Endothelial cell of umbilical vein (primary cell): ENCODE measurements at regions of chr18 and their contacts with region 1.

Region 1: GRCh38 chr18:25517881-25518715 is 166.1 kb upstream of the ZNF521 start:
- DNase-seq: peak; percentile 99
- H3K4me3 ChIP-seq: no peak overlapping the region
- H3K27ac ChIP-seq: peak overlapping the region; percentile 91
- H3K4me1 ChIP-seq: peaks cover 37% of the 10 kb centered on the region
- H3K27me3 ChIP-seq: no peaks in the 10 kb centered on the region
- CTCF ChIP-seq: no peak
- POLR2A ChIP-seq: no peak

Region 2: DNA sequence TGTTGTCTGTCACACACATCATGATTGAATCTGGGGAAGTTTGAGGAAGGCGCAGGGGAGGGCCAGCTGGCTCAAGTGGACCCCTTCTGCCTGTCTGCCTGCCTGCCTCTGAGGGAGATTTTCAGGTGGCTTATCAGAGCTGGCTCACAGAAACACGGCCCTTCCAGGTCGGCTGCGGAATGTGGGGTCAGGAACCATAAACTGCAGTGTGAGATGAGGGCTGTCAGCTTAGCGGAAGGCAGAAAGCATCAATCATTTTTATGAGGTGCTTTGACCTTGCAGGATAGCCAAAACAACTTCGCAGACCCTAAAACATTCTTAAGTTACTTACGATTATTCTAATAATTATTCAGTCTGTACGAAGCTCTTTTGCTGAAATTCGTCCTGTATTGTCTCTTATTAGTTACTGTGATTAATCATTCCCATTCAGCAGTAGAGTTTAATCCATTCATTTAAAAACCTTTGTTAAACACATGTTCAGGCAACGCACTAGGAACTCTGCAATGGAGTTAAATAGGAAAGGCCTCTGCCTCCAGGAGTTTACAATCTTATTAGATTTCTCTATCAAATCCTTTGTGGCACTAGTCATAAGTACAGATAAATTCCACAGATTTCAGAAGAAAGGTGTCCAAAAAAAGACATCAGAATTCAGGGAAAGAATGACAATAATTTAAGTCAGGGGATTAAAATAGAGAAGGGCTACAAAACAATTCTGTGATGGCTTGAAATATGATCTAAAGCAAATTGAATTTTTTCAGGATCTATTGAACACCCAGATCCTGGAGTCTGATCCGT is 686.0 kb before region 1 on chr18:
- CTCF ChIA-PET with region 1: interaction called, 3 read pairs
- POLR2A ChIA-PET with region 1: no interaction called
- dilution Hi-C with region 1: no loop called
- intact Hi-C with region 1: loop called (anchors 1 kb)
- DNase-seq: peak; percentile 98
- H3K4me3 ChIP-seq: no peak overlapping the region
- H3K27ac ChIP-seq: peak overlapping the region; percentile 93
- H3K4me1 ChIP-seq: peaks cover 37% of the 10 kb centered on the region
- H3K27me3 ChIP-seq: peaks cover 0 to 2% of the 10 kb centered on the region in 2 experiments
- CTCF ChIP-seq: no peak
- POLR2A ChIP-seq: peak; percentile 96

Region 3: GRCh38 chr18:24878289-24878688 is 639.8 kb before region 1 on chr18:
- CTCF ChIA-PET with region 1: no interaction called
- POLR2A ChIA-PET with region 1: no interaction called
- dilution Hi-C with region 1: no loop called
- intact Hi-C with region 1: loop called (anchors 5 kb)
- DNase-seq: peak; percentile 75
- H3K4me3 ChIP-seq: no peak overlapping the region
- H3K27ac ChIP-seq: no peak overlapping the region
- H3K4me1 ChIP-seq: peaks cover 11% of the 10 kb centered on the region
- H3K27me3 ChIP-seq: no peaks in the 10 kb centered on the region
- CTCF ChIP-seq: peak; percentile 23 to 44
- POLR2A ChIP-seq: no peak

Region 4: DNA sequence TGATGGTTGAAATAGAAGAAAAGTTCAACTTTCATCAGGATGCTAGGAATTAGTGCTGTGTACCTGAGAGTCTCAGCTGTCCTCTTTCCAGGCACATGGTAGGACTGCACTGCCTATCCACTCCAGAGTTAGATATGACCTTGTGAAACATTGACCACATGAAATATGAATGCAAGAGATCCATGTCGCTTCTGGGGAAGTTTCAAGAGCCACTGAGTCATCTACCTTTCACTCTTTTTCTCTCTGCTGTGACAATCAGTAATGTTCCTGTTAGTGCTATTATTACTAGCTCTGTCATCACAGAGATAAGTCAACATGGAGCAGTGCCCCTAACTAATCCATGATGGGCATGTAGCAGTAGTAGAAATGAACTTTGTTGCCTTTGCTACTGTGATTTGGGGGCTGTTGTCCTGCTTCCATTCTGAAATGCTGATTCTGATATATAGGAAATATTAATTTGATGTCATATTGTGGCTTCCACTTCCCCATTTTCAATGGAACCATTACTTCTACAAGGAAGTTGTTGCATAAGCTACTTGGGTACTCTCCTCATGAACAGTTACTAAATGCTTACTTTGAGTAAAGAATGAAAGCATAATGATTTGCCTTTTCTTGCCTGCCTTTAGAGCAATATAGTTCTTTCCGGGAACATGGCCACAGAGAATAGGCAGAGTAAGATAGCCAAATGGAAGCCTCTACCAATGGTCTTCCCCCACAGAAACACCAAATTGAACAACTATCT is 26.6 kb after region 1 on chr18:
- CTCF ChIA-PET with region 1: no interaction called
- POLR2A ChIA-PET with region 1: no interaction called
- dilution Hi-C with region 1: no loop called
- intact Hi-C with region 1: no loop called
- DNase-seq: no peak
- H3K4me3 ChIP-seq: no peak overlapping the region
- H3K27ac ChIP-seq: no peak overlapping the region
- H3K4me1 ChIP-seq: no peaks in the 10 kb centered on the region
- H3K27me3 ChIP-seq: peaks cover 0 to 2% of the 10 kb centered on the region in 2 experiments
- CTCF ChIP-seq: no peak
- POLR2A ChIP-seq: no peak

Region 5: GRCh38 chr18:25561918-25562317 is 43.8 kb after region 1 on chr18:
- CTCF ChIA-PET with region 1: interaction called, 3 read pairs
- POLR2A ChIA-PET with region 1: no interaction called
- dilution Hi-C with region 1: no loop called
- intact Hi-C with region 1: loop called (anchors 2 kb)
- DNase-seq: peak; percentile 15
- H3K4me3 ChIP-seq: no peak overlapping the region
- H3K27ac ChIP-seq: no peak overlapping the region
- H3K4me1 ChIP-seq: peaks cover 7% of the 10 kb centered on the region
- H3K27me3 ChIP-seq: peaks cover 0 to 2% of the 10 kb centered on the region in 2 experiments
- CTCF ChIP-seq: peak in 1 of 2 donors; percentile 15
- POLR2A ChIP-seq: no peak

Region 6: DNA sequence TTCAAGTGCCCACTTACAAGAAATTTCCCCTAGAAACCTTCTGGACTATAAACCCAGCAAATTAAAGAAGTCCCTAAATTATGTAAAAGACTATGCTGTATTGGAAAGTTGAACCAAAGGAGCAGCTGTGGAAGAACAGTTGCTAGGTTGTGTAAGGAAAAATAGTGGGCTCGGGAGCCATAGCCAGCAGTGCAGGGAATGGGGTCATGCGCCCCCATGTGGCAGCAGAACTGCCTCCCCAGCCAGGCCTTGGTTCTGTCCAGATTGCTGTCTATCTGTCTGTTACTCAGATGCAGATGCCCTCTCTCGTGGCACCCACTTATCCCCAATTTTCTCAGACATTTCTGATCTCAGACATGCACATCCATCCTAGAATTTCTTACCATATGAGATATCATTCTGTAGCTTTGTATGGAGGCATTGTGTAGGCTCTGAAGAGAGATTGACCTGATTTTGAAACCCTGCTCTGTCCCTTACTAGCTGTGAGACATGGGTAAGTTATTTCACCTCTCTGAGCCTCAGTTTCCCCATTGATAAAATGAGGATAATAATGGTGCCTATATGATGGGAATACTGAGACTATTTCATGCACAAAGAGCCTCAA is 314.0 kb after region 1 on chr18:
- CTCF ChIA-PET with region 1: no interaction called
- POLR2A ChIA-PET with region 1: no interaction called
- dilution Hi-C with region 1: no loop called
- intact Hi-C with region 1: loop called (anchors 1 kb)
- DNase-seq: peak; percentile 73
- H3K4me3 ChIP-seq: no peak overlapping the region
- H3K27ac ChIP-seq: no peak overlapping the region
- H3K4me1 ChIP-seq: peaks cover 4% of the 10 kb centered on the region
- H3K27me3 ChIP-seq: peaks cover 0 to 5% of the 10 kb centered on the region in 2 experiments
- CTCF ChIP-seq: peak; percentile 83 to 96
- POLR2A ChIP-seq: no peak